ENCODE measurements at regions of chr10 and their contacts with region 1.

Region 1: GRCh38 chr10:4767033-4767814 is 58.8 kb upstream of the AKR1E2 start:
- DNase-seq: peak in 1 of 10 donors; percentile 11

Region 2: GRCh38 chr10:3197348-3198003 is 1569.7 kb before region 1 on chr10:
- intact Hi-C with region 1: loop called (anchors 2 kb)
- DNase-seq: peak; percentile 66 to 97 (median 83)